Sigmoid colon (tissue), 7 donors: ENCODE measurements at regions of chr5 and their contacts with region 1.

Region 1: GRCh38 chr5:5421961-5422818 is at the start of gene ICE1:
- DNase-seq: peak; percentile 99
- H3K4me3 ChIP-seq: peak within 1 kb of the TSS; percentile 92 to 98 (median 96)
- H3K27ac ChIP-seq: peak within 1 kb of the TSS; percentile 90 to 97 (median 94)
- H3K4me1 ChIP-seq: peaks cover 0 to 50% (median 37%) of the 10 kb centered on the region in 4 donors
- H3K27me3 ChIP-seq: no peaks in the 10 kb centered on the region
- CTCF ChIP-seq: no peak
- EP300 ChIP-seq: peak in 2 of 4 donors; percentile 68 to 71
- POLR2A ChIP-seq: peak; percentile 50 to 70
- total RNA-seq, gene ICE1: 28.1 to 32.6 (median 30.8) TPM

Region 2: DNA sequence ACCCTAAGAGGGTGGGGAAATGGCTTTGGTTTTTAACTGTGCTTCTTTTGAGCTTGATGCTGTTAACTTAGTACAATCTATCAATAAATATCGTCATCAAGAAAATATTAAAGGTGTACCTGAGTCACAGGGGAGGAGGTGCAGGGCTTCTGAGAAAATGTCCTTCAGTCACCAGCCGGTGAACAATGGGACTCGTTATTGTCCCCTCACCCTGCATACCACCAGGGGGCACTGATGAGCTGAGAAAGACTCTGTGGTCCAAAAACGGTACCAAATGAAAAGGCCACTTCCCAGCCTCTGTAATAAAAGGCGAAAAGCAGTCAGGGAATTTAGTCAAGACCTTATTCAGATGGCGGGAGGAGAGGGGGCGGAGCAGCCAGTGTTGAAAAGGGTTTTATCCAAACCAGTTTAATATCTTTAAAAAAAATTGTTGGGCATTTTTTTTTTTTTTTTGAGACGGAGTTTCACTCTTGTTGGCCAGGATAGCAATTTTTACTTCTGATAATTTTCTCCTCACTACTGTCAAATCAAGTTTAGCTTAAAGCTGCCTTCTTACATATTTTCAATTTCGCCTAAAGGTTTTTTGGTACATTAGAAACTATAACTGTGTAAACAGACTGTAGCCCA is 554.0 kb before region 1 on chr5:
- intact Hi-C with region 1: loop called (anchors 5 kb)
- DNase-seq: peak; percentile 69
- H3K4me3 ChIP-seq: no peak overlapping the region
- H3K27ac ChIP-seq: no peak overlapping the region
- H3K4me1 ChIP-seq: no peaks in the 10 kb centered on the region
- H3K27me3 ChIP-seq: no peaks in the 10 kb centered on the region
- CTCF ChIP-seq: peak; percentile 35 to 74 (median 47)
- EP300 ChIP-seq: no peak
- POLR2A ChIP-seq: no peak

Region 3: GRCh38 chr5:4941957-4942830 is 480.0 kb before region 1 on chr5:
- intact Hi-C with region 1: loop called (anchors 5 kb)
- DNase-seq: no peak
- H3K4me3 ChIP-seq: no peak overlapping the region
- H3K27ac ChIP-seq: no peak overlapping the region
- H3K4me1 ChIP-seq: peaks cover 0 to 4% (median 1%) of the 10 kb centered on the region in 4 donors
- H3K27me3 ChIP-seq: no peaks in the 10 kb centered on the region
- CTCF ChIP-seq: peak; percentile 55 to 96 (median 84)
- EP300 ChIP-seq: no peak
- POLR2A ChIP-seq: no peak

Region 4: GRCh38 chr5:5141625-5142532 is 280.3 kb before region 1 on chr5:
- intact Hi-C with region 1: loop called (anchors 1 kb)
- DNase-seq: peak; percentile 65
- H3K4me3 ChIP-seq: peak overlapping the region in 2 of 4 donors; percentile 33 to 39
- H3K27ac ChIP-seq: no peak overlapping the region
- H3K4me1 ChIP-seq: peaks cover 0 to 22% (median 21%) of the 10 kb centered on the region in 4 donors
- H3K27me3 ChIP-seq: peaks cover 13 to 44% (median 22%) of the 10 kb centered on the region in 3 donors
- CTCF ChIP-seq: peak in 2 of 4 experiments; percentile 38 to 72
- EP300 ChIP-seq: no peak
- POLR2A ChIP-seq: no peak

Region 5: DNA sequence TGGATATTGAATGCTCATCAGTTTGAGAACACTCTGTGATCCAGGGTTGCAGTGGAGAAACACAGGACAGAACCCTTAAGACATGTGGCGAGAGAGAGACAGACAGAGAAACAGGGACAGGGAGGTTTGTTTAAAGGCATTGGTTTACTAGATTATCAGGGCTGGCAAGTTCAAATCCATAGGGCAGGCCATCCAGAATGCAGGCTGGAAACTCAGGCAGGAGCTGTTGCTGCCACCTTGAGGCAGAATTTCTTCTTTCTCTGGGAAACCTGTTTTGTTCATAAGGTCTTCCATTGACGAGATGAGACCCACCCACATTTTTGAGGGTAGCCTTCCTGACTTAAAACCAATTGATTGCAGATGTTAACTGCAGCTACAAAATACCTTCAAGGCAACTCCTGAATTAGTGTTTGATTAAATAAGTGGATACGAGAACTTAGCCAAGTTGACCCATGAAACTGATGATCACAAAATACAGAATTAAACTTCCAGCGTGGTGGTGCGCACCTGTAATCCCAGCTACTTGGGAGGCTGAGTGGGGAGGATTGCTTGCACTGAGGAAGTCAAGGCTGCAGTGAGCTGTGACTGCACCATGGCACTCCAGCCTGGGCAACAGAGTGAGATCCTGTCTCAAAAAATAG is 1154.8 kb after region 1 on chr5:
- intact Hi-C with region 1: loop called (anchors 10 kb)
- DNase-seq: no peak
- H3K4me3 ChIP-seq: no peak overlapping the region
- H3K27ac ChIP-seq: no peak overlapping the region
- H3K4me1 ChIP-seq: no peaks in the 10 kb centered on the region
- H3K27me3 ChIP-seq: no peaks in the 10 kb centered on the region
- CTCF ChIP-seq: peak; percentile 9 to 60 (median 39)
- EP300 ChIP-seq: no peak
- POLR2A ChIP-seq: no peak

Region 6: GRCh38 chr5:6712577-6713275 is 1290.5 kb after region 1 on chr5:
- intact Hi-C with region 1: loop called (anchors 2 kb)
- DNase-seq: peak; percentile 98
- H3K4me3 ChIP-seq: peak overlapping the region; percentile 69 to 78 (median 74)
- H3K27ac ChIP-seq: peak overlapping the region; percentile 92 to 98 (median 97)
- H3K4me1 ChIP-seq: peaks cover 0 to 44% (median 36%) of the 10 kb centered on the region in 4 donors
- H3K27me3 ChIP-seq: no peaks in the 10 kb centered on the region
- CTCF ChIP-seq: no peak
- EP300 ChIP-seq: no peak
- POLR2A ChIP-seq: no peak